ENCODE measurements at regions of chr9 and their contacts with region 1.

Region 1: DNA sequence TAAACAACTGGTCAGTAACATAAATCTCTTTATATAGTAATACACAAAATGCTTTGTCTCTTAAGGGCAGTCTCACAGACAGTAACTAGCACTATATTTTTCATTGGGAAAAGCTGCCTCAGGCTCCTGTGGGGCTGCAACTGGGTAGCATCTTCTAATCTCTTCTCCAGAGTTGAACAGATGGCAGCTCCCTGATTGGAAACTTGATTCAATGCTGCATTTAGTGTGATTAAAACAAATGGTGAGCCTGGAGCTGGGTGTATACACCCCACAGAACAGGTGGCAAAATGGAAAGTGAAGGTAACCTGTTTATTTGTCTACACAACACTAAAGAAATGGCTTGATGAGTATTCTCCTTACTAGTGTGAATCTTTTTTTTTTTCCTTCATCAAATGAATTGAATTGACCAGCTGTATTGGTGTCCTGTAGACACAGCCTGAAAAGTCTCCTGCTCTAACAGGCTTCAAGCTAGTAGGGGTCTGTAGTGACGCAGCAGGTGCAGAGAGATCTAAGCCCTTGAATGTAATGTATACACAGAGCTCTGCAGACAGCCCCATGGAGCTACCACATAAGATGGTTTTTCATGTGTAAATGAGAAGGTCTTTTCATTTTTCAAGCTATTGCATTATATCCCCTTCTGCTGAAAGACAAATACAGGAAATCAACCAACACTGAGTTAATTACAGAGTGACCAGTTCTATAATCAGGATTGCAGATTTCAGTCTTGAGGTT is 43.3 kb downstream of the IZUMO3 start:
- H3K4me3 Mint-ChIP-seq: no peak overlapping the region
- H3K27ac Mint-ChIP-seq: no peak overlapping the region
- H3K4me1 Mint-ChIP-seq: no peaks in the 10 kb centered on the region
- H3K27me3 Mint-ChIP-seq: no peaks in the 10 kb centered on the region

Region 2: GRCh38 chr9:24449976-24450375 is 52.4 kb before region 1 on chr9:
- intact Hi-C with region 1: loop called (anchors 10 kb)
- H3K4me3 Mint-ChIP-seq: no peak overlapping the region
- H3K27ac Mint-ChIP-seq: no peak overlapping the region
- H3K4me1 Mint-ChIP-seq: no peaks in the 10 kb centered on the region
- H3K27me3 Mint-ChIP-seq: no peaks in the 10 kb centered on the region

Measured in dendritic cell treated with granulocyte-macrophage colony-stimulating factor and Interleukin-4, amounts not matched to agents 40 ng/mL and 50 ng/mL, for 4 days (primary cell).